ENCODE measurements at regions of chr9 and their contacts with region 1.

Region 1: GRCh38 chr9:136721339-136722092 is 9.1 kb downstream of the DIPK1B start:
- DNase-seq: no peak
- H3K4me3 ChIP-seq: no peak overlapping the region
- H3K27ac ChIP-seq: peak overlapping the region in 1 of 4 donors; percentile 31
- H3K4me1 ChIP-seq: peaks cover 12 to 34% (median 25%) of the 10 kb centered on the region in 4 donors
- H3K27me3 ChIP-seq: peaks cover 19% of the 10 kb centered on the region
- CTCF ChIP-seq: no peak
- EP300 ChIP-seq: no peak
- POLR2A ChIP-seq: no peak

Region 2: GRCh38 chr9:136674786-136675349 is 46.6 kb before region 1 on chr9:
- in situ Hi-C with region 1: no loop called
- intact Hi-C with region 1: loop called (anchors 1 kb)
- DNase-seq: peak; percentile 82
- H3K4me3 ChIP-seq: no peak overlapping the region
- H3K27ac ChIP-seq: peak overlapping the region in 3 of 4 donors; percentile 25 to 42 (median 25)
- H3K4me1 ChIP-seq: peaks cover 0 to 26% (median 13%) of the 10 kb centered on the region in 4 donors
- H3K27me3 ChIP-seq: peaks cover 15% of the 10 kb centered on the region
- CTCF ChIP-seq: no peak
- EP300 ChIP-seq: no peak
- POLR2A ChIP-seq: peak; percentile 7

Region 3: GRCh38 chr9:136762915-136763648 is 41.6 kb after region 1 on chr9:
- in situ Hi-C with region 1: no loop called
- intact Hi-C with region 1: no loop called
- DNase-seq: peak; percentile 52
- H3K4me3 ChIP-seq: no peak overlapping the region
- H3K27ac ChIP-seq: no peak overlapping the region
- H3K4me1 ChIP-seq: peaks cover 0 to 8% (median 5%) of the 10 kb centered on the region in 4 donors
- H3K27me3 ChIP-seq: peaks cover 62% of the 10 kb centered on the region
- CTCF ChIP-seq: no peak
- EP300 ChIP-seq: no peak
- POLR2A ChIP-seq: no peak